ENCODE measurements at regions of chr20 and their contacts with region 1.

Region 1: DNA sequence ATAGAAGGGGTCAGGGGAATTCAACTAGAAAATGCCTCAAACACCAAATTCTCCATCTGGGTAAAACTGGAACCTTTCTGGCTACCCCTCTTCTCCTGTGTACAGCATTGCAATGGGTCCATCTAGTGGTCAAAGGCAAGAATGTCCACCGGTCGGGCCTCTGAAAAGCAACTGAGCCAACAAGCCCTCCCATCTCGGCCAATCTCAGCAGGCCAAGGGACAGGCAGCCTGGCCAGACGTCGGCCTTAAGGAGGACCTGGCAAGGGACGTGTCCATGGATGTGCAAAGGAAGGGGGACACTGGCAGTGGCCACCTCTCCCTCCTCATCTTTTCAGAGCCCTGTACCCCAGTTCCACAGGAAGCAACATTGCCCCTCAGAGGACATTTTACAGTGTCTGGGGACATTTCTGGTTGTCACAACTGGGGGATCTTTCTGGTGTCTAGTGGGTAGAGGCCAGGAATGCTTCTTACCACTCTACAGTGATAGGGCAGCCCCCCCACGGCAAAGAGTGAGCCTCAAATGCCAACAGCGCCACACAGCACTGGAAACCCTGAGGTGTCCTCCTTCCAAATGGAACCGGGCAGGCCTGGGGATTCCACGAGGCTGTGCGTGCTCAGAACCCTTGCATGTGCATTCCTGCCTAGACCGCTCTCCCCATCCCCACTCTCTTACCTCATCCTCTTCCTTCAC is 99.8 kb upstream of the FOXA2 start:
- DNase-seq: peak; percentile 54 to 71 (median 62)
- ATAC-seq: peak; percentile 57 to 85 (median 82)
- H3K4me3 ChIP-seq: no peak overlapping the region
- H3K27ac ChIP-seq: no peak overlapping the region
- H3K4me1 ChIP-seq: peaks cover 0 to 19% (median 4%) of the 10 kb centered on the region in 12 donors
- H3K27me3 ChIP-seq: peaks cover 0 to 11% (median 0%) of the 10 kb centered on the region in 9 donors
- CTCF ChIP-seq: peak; percentile 77 to 91 (median 85)
- POLR2A ChIP-seq: no peak

Region 2: DNA sequence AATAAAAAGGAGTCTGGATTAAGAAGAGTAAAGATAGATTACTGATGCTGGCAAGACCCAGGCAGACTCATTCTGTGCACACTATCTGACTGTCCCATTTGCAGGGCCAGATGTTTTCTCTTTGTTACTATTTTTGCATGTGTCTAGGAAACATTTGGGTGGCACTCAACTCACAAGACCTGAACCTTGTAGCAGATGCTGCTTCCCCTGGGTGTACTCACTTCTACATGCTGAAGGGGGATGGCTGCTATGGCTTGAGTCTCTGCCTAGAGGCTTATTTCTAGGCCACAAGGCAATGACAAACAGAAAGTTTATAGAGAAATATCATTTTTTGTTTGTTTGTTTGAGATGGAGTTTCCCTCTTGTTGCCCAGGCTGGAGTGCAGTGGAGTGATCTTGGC is 451.3 kb before region 1 on chr20:
- intact Hi-C with region 1: no loop called
- DNase-seq: no peak
- ATAC-seq: no peak
- H3K4me3 ChIP-seq: no peak overlapping the region
- H3K27ac ChIP-seq: no peak overlapping the region
- H3K4me1 ChIP-seq: no peaks in the 10 kb centered on the region
- H3K27me3 ChIP-seq: peaks cover 0 to 10% (median 0%) of the 10 kb centered on the region in 9 donors
- CTCF ChIP-seq: no peak
- POLR2A ChIP-seq: no peak

Region 3: DNA sequence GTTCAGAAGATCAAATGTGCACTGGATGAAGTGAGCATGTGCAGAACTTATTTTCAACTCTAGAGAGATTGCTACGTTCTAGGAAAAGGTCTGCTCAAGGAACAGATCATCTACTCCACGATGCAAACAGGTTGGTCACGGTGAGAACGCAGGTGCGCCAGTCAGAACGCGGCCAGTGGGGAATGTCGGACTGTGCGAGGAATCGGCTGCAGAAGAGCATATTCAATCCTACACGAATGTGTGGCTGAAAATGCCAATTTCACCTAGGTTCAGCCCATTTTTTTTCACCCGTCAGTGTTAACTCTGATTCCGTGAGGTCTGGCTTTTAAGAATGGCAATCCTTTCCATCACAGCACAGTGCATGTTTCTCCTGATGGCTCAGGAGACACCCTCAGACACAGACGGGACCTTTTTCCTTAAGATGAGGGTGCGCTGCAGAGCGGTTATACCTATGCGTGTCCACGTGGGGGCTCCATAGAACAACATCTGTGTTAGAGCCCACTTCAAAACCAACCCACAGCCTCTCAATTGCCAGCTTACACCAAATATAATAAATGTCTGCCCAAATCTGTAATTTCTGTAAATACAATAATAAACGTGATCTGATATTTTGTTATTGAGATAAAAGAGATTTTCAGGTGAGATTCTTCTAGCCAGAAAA is 350.2 kb before region 1 on chr20:
- intact Hi-C with region 1: loop called in 9 of 10 experiments (anchors 1 to 5 kb)
- DNase-seq: peak in 3 of 5 donors; percentile 34 to 44 (median 36)
- ATAC-seq: peak in 3 of 4 donors; percentile 64 to 80 (median 66)
- H3K4me3 ChIP-seq: no peak overlapping the region
- H3K27ac ChIP-seq: no peak overlapping the region
- H3K4me1 ChIP-seq: no peaks in the 10 kb centered on the region
- H3K27me3 ChIP-seq: peaks cover 0 to 82% (median 4%) of the 10 kb centered on the region in 9 donors
- CTCF ChIP-seq: peak; percentile 54 to 79 (median 66)
- POLR2A ChIP-seq: no peak

Region 4: GRCh38 chr20:22339091-22339881 is 344.9 kb before region 1 on chr20:
- intact Hi-C with region 1: loop called (anchors 1 to 5 kb)
- DNase-seq: peak in 1 of 5 donors; percentile 31
- ATAC-seq: peak in 3 of 4 donors; percentile 34 to 59 (median 55)
- H3K4me3 ChIP-seq: no peak overlapping the region
- H3K27ac ChIP-seq: no peak overlapping the region
- H3K4me1 ChIP-seq: no peaks in the 10 kb centered on the region
- H3K27me3 ChIP-seq: peaks cover 0 to 57% (median 7%) of the 10 kb centered on the region in 9 donors
- CTCF ChIP-seq: peak; percentile 49 to 85 (median 73)
- POLR2A ChIP-seq: no peak

Region 5: GRCh38 chr20:23019403-23019802 is 335.2 kb after region 1 on chr20:
- intact Hi-C with region 1: no loop called
- DNase-seq: peak in 1 of 5 donors; percentile 4
- ATAC-seq: no peak
- H3K4me3 ChIP-seq: no peak overlapping the region
- H3K27ac ChIP-seq: no peak overlapping the region
- H3K4me1 ChIP-seq: peaks cover 0 to 11% (median 0%) of the 10 kb centered on the region in 12 donors
- H3K27me3 ChIP-seq: no peaks in the 10 kb centered on the region
- CTCF ChIP-seq: no peak
- POLR2A ChIP-seq: no peak

Measured in heart left ventricle (tissue), 16 donors.